PC-3 (cell line): ENCODE measurements at regions of chr3 and their contacts with region 1.

Region 1: DNA sequence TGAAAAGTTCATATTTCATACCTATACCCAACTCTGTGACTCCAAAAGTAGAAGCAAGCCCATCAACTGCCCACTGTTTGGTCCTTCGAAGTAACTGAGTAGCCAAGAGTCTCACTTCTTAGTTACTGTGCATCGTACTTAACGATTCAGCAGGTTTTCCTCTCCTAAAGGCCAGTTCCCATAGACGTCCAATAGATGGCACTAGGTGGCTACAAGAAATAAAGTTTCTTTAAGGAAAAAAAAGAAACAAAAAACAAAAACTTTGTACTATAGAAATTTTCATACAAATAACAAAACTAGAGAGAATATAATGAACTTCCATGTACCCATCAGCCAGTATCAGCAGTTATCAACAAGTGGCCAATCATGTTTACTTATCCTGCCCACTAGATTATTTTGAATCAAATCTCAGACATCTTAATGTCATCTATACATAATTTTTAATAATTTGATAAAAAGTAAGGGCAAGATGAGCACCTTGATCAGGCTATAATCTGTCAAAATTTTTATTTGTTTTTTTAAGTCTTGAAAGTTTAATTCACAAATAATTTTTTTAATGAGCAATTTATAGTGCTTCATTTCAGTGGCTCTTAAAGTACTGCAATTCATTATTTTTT is 63.8 kb upstream of the ACP3 start:
- DNase-seq: peak; percentile 77
- ATAC-seq: no peak
- H3K4me3 ChIP-seq: no peak overlapping the region
- H3K27ac ChIP-seq: no peak overlapping the region
- H3K4me1 ChIP-seq: peaks cover 28% of the 10 kb centered on the region
- H3K27me3 ChIP-seq: no peaks in the 10 kb centered on the region
- CTCF ChIP-seq: peak; percentile 77

Region 2: GRCh38 chr3:132225664-132226063 is 27.7 kb before region 1 on chr3:
- CTCF ChIA-PET with region 1: no interaction called
- POLR2A ChIA-PET with region 1: no interaction called
- intact Hi-C with region 1: loop called (anchors 2 kb)
- DNase-seq: peak; percentile 89
- ATAC-seq: peak; percentile 99
- H3K4me3 ChIP-seq: no peak overlapping the region
- H3K27ac ChIP-seq: peak overlapping the region; percentile 91
- H3K4me1 ChIP-seq: peaks cover 11% of the 10 kb centered on the region
- H3K27me3 ChIP-seq: no peaks in the 10 kb centered on the region
- CTCF ChIP-seq: no peak

Region 3: DNA sequence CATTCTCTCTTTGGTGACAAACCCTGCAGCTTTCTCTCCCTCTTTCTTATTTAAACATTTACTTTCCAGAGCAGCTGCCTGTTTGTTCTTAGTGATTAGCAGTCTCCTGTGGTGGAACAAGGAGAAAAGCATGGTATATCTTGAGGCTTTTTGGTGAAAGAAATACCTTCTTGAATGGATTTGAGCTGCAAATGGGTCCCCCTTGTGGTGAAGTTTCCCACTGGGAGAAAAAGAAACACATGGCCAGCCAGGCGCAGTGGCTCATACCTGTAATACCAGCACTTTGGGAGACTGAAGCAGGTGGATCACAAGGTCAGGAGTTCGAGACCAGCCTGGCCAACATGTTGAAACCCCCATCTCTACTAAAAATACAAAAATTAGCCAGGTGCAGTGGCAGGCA is 15.6 kb after region 1 on chr3:
- CTCF ChIA-PET with region 1: interaction called, 3 read pairs
- POLR2A ChIA-PET with region 1: no interaction called
- intact Hi-C with region 1: loop called (anchors 1 kb)
- DNase-seq: peak; percentile 30
- ATAC-seq: peak; percentile 43
- H3K4me3 ChIP-seq: no peak overlapping the region
- H3K27ac ChIP-seq: no peak overlapping the region
- H3K4me1 ChIP-seq: no peaks in the 10 kb centered on the region
- H3K27me3 ChIP-seq: no peaks in the 10 kb centered on the region
- CTCF ChIP-seq: peak; percentile 43; the same call in 1 of the 2 replicates

Region 4: DNA sequence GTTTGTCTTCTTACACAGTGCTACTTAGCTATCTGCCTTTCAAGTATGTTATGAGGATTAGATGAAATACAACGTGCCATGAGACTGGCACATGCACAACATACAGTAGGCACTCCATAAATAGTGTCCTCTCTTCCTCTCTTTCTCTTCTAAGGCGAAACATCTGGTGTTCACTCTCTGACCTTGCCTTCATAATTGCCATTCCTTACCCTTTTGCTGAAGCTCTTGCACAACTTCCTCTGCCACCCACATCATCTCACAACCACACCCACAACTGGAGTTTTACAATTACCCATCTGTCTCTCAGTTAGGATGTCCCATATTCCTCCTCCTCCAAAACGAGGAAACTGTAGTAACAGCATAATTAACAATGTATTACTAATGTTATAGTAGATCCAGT is 37.5 kb after region 1 on chr3:
- CTCF ChIA-PET with region 1: no interaction called
- POLR2A ChIA-PET with region 1: no interaction called
- intact Hi-C with region 1: no loop called
- DNase-seq: peak; percentile 6
- ATAC-seq: no peak
- H3K4me3 ChIP-seq: no peak overlapping the region
- H3K27ac ChIP-seq: no peak overlapping the region
- H3K4me1 ChIP-seq: no peaks in the 10 kb centered on the region
- H3K27me3 ChIP-seq: no peaks in the 10 kb centered on the region
- CTCF ChIP-seq: no peak

Region 5: GRCh38 chr3:132311841-132312240 is 58.5 kb after region 1 on chr3:
- CTCF ChIA-PET with region 1: no interaction called
- POLR2A ChIA-PET with region 1: no interaction called
- intact Hi-C with region 1: loop called (anchors 1 kb)
- DNase-seq: no peak
- ATAC-seq: no peak
- H3K4me3 ChIP-seq: no peak overlapping the region
- H3K27ac ChIP-seq: no peak overlapping the region
- H3K4me1 ChIP-seq: peaks cover 13% of the 10 kb centered on the region
- H3K27me3 ChIP-seq: no peaks in the 10 kb centered on the region
- CTCF ChIP-seq: no peak

Region 6: DNA sequence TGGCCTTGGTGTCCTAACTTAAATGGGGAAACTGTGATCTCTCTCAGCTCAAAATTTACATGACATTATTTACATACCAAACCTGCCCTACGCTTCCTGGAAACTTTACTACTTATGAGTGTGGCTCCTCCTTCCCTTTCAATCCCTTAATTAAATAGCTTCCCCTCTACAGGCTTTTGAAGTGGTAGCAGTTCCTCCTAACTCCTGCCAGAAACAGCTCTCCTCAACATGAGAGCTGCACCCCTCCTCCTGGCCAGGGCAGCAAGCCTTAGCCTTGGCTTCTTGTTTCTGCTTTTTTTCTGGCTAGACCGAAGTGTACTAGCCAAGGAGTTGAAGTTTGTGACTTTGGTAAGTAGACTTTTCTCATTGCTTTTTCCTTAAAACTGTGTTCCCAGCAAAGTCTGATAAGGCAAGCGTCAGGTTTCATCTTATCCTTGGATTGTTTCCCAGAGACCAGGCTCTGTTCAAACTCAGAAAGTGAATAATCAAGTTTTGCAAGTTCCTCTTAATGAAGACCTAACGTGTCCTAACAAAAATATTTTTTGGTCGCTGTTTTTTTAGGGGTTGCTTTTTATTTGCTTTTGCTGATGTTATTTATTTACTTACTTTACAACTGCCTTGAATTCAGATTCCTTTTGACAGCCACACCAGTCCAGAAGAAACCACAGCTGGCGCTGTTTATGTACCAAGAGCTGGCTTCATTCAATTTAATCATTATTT is 64.0 kb after region 1 on chr3 and contains the start of gene ACP3:
- CTCF ChIA-PET with region 1: interaction called, 9 read pairs
- POLR2A ChIA-PET with region 1: no interaction called
- intact Hi-C with region 1: loop called (anchors 1 kb)
- DNase-seq: peak; percentile 95
- ATAC-seq: peak; percentile 69
- H3K4me3 ChIP-seq: peak within 1 kb of the TSS; percentile 58
- H3K27ac ChIP-seq: peak within 1 kb of the TSS; percentile 98
- H3K4me1 ChIP-seq: peaks cover 36% of the 10 kb centered on the region
- H3K27me3 ChIP-seq: no peaks in the 10 kb centered on the region
- CTCF ChIP-seq: no peak
- total RNA-seq, gene ACP3: 0.15 and 0.75 TPM in 2 replicates

Region 7: DNA sequence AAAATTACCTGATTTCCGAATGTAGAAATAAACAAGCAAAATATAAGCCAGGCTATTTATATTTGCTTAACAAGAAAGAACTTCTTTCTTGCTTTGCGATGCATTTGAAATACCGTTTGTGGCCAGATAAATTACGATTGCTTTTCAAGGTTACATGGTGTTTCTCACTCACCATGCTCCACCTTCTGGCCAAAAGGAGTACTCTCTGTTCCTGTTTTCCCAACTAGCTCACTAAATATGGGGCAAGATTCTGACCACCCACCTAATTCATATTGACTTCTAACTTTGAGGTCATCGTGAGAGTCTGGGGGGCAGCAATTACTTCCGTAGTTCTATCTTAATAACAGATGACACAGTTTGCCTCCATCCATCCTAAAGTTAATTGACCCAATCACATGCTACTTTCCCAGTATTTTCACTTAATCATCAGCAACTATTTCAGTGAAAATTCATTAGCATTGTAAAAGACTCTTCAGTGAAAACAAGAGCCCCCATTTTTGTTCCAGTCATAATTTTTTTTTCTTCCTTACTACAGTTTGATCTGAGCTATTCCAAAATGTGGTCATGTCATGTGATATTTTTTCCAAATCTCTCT is 89.7 kb after region 1 on chr3:
- CTCF ChIA-PET with region 1: interaction called, 33 read pairs
- POLR2A ChIA-PET with region 1: no interaction called
- intact Hi-C with region 1: loop called (anchors 1 kb)
- DNase-seq: peak; percentile 66
- ATAC-seq: peak; percentile 31; the same call in 1 of the 2 replicates
- H3K4me3 ChIP-seq: no peak overlapping the region
- H3K27ac ChIP-seq: no peak overlapping the region
- H3K4me1 ChIP-seq: peaks cover 37% of the 10 kb centered on the region
- H3K27me3 ChIP-seq: no peaks in the 10 kb centered on the region
- CTCF ChIP-seq: peak; percentile 82

Region 8: GRCh38 chr3:132399054-132399929 is 145.9 kb after region 1 on chr3:
- CTCF ChIA-PET with region 1: no interaction called
- POLR2A ChIA-PET with region 1: no interaction called
- intact Hi-C with region 1: loop called (anchors 1 kb)
- DNase-seq: peak; percentile 61
- ATAC-seq: peak; percentile 51; the same call in 1 of the 2 replicates
- H3K4me3 ChIP-seq: no peak overlapping the region
- H3K27ac ChIP-seq: no peak overlapping the region
- H3K4me1 ChIP-seq: no peaks in the 10 kb centered on the region
- H3K27me3 ChIP-seq: no peaks in the 10 kb centered on the region
- CTCF ChIP-seq: peak; percentile 88